ENCODE measurements at regions of chr9 and their contacts with region 1.

Region 1: GRCh38 chr9:136790927-136791641 is at the start of gene TMEM141:
- DNase-seq: peak; percentile 99 to 100 (median 100)
- ATAC-seq: peak; percentile 85
- H3K4me3 ChIP-seq: peak within 1 kb of the TSS; percentile 73 to 74
- H3K4me3 Mint-ChIP-seq: peak within 1 kb of the TSS; percentile 85
- H3K27ac ChIP-seq: peak within 1 kb of the TSS; percentile 88 to 94
- H3K27ac Mint-ChIP-seq: peak within 1 kb of the TSS; percentile 97
- H3K4me1 ChIP-seq: peaks cover 32% of the 10 kb centered on the region
- H3K4me1 Mint-ChIP-seq: peaks cover 29% of the 10 kb centered on the region
- H3K27me3 ChIP-seq: no peaks in the 10 kb centered on the region
- H3K27me3 Mint-ChIP-seq: no peaks in the 10 kb centered on the region
- CTCF ChIP-seq: no peak
- total RNA-seq, gene TMEM141: 14.5 to 16.6 TPM

Region 2: DNA sequence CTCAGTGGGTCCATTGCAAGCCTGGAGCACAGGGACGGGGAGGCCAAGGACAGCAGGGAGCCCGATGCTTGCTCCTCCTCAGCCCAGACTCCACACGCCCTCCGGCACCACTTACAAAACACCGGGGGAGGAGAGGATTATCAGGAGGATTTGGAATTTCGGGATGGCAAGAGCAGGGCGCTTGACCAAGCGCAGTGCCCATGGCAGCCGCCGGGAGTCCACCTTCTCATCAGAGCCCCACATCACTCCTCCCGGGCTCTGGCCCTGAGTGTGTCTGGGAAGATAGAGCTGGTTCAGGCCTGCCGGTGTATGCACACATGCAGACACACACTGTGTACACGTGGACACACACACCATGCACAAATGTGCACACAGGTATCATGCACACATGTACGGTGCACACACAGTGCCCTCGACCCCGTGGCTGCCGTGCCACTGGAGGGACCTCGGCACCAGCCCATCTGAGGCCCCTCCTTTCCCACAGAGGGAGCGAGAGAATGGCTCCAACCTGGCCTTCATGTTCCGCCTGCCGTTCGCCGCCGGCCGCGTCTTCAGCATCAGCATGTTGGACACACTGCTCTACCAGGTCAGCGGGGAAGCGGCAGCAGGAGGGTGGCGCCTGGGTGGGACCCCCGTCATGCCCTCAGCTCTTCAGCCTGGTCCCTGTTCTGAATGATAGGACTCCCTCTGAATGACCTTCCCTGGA is 1007.4 kb before region 1 on chr9:
- CTCF ChIA-PET with region 1: no interaction called
- POLR2A ChIA-PET with region 1: no interaction called
- intact Hi-C with region 1: no loop called
- DNase-seq: peak in 1 of 9 experiments; percentile 1
- ATAC-seq: no peak
- H3K4me3 ChIP-seq: no peak overlapping the region
- H3K4me3 Mint-ChIP-seq: no peak overlapping the region
- H3K27ac ChIP-seq: no peak overlapping the region
- H3K27ac Mint-ChIP-seq: no peak overlapping the region
- H3K4me1 ChIP-seq: no peaks in the 10 kb centered on the region
- H3K4me1 Mint-ChIP-seq: no peaks in the 10 kb centered on the region
- H3K27me3 ChIP-seq: no peaks in the 10 kb centered on the region
- H3K27me3 Mint-ChIP-seq: no peaks in the 10 kb centered on the region
- CTCF ChIP-seq: no peak

Region 3: GRCh38 chr9:136807281-136808074 is 16.4 kb after region 1 on chr9 and contains the start of gene RABL6:
- CTCF ChIA-PET with region 1: interaction called, 10 read pairs
- POLR2A ChIA-PET with region 1: interaction called, 9 read pairs
- intact Hi-C with region 1: loop called (anchors 1 kb)
- DNase-seq: peak; percentile 64 to 92 (median 81)
- ATAC-seq: peak; percentile 85
- H3K4me3 ChIP-seq: peak within 1 kb of the TSS; percentile 78 to 92
- H3K4me3 Mint-ChIP-seq: peak within 1 kb of the TSS; percentile 88
- H3K27ac ChIP-seq: peak within 1 kb of the TSS; percentile 66 to 79
- H3K27ac Mint-ChIP-seq: peak within 1 kb of the TSS; percentile 89
- H3K4me1 ChIP-seq: peaks cover 26% of the 10 kb centered on the region
- H3K4me1 Mint-ChIP-seq: peaks cover 34% of the 10 kb centered on the region
- H3K27me3 ChIP-seq: no peaks in the 10 kb centered on the region
- H3K27me3 Mint-ChIP-seq: no peaks in the 10 kb centered on the region
- CTCF ChIP-seq: no peak
- total RNA-seq, gene RABL6: 53.3 to 55.5 TPM

Region 4: GRCh38 chr9:136835162-136835931 is 44.3 kb after region 1 on chr9:
- CTCF ChIA-PET with region 1: no interaction called
- POLR2A ChIA-PET with region 1: no interaction called
- intact Hi-C with region 1: no loop called
- DNase-seq: peak in 1 of 9 experiments; percentile 12
- ATAC-seq: no peak
- H3K4me3 ChIP-seq: no peak overlapping the region
- H3K4me3 Mint-ChIP-seq: no peak overlapping the region
- H3K27ac ChIP-seq: no peak overlapping the region
- H3K27ac Mint-ChIP-seq: no peak overlapping the region
- H3K4me1 ChIP-seq: no peaks in the 10 kb centered on the region
- H3K4me1 Mint-ChIP-seq: peaks cover 4% of the 10 kb centered on the region
- H3K27me3 ChIP-seq: no peaks in the 10 kb centered on the region
- H3K27me3 Mint-ChIP-seq: no peaks in the 10 kb centered on the region
- CTCF ChIP-seq: no peak

Region 5: DNA sequence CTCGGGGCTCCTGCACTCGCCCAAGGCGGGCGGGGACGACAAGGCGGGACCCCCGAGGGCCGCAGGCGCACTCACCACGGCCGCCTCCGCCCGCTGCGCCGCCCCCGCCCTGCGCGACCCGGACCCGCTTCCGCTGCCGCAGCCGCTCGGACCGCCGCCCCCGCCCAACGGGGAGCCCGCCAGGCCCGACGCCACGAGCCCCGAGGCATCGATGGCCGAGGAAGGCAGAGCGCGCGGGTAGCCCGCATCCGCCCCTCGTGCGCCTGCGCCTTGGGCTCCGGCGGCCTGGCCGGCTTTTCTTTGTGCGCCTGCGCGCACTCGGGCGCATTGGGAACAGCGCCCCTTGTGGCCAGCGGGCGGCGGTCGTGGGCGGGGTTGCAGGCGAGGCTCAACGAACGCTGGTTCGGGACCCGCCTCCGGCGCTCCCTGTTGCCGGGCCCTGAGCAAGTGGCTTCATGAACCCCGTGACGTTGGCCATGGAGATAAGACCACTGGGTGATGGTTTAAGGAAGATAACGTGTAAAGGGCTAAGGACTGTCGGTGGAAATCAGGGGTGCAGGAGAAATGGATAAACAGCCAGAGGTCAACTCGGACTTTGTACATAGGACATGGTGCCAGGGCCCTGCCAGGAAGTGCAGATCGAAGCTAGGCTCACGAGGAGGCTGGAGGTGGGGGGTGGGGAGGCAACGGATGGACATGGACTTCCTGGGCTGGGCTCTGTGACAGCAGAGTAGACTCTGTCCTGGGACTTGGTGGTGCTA is 153.6 kb after region 1 on chr9 and contains the starts of genes C8G and FBXW5:
- CTCF ChIA-PET with region 1: no interaction called
- POLR2A ChIA-PET with region 1: no interaction called
- intact Hi-C with region 1: loop called (anchors 1 kb)
- DNase-seq: peak; percentile 87 to 98 (median 93)
- ATAC-seq: peak; percentile 87
- H3K4me3 ChIP-seq: peak within 1 kb of the TSS; percentile 63 to 79
- H3K4me3 Mint-ChIP-seq: peak within 1 kb of the TSS; percentile 82
- H3K27ac ChIP-seq: peak within 1 kb of the TSS; percentile 28 to 48
- H3K27ac Mint-ChIP-seq: peak within 1 kb of the TSS; percentile 62
- H3K4me1 ChIP-seq: peaks cover 16% of the 10 kb centered on the region
- H3K4me1 Mint-ChIP-seq: peaks cover 12% of the 10 kb centered on the region
- H3K27me3 ChIP-seq: no peaks in the 10 kb centered on the region
- H3K27me3 Mint-ChIP-seq: no peaks in the 10 kb centered on the region
- CTCF ChIP-seq: peak; percentile 96
- total RNA-seq, gene C8G: not detected
- total RNA-seq, gene FBXW5: 38.4 to 39.5 TPM

Region 6: DNA sequence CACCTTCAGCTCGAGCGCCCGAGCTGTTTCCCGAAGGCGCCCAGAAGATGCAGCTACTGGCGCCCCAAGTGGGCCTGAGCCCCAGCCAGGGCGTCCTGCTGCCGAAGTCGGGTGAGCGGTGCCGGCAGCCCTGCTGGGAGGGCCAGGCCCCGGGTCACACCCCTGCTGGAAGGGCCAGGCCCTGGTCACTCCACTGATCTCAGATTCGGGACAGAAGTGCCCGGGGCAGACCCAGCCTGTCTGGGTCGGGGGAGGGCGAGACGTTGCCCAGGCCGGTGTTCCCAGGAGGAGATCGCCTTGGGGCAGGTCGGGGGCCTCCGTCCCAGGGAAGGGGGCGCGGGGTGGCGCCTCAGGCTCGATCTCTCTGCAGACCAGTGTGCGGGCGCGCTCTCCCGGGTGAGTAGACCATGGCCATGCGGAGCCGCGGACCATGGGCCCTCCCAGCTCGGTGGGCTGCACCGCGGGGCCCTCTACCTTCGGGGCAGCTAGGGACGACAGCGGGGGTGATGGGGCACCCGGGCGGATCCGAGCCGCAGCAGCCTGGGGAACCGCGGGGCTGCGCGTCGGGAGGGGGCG is 194.0 kb after region 1 on chr9:
- CTCF ChIA-PET with region 1: no interaction called
- POLR2A ChIA-PET with region 1: no interaction called
- intact Hi-C with region 1: no loop called
- DNase-seq: peak in 2 of 9 experiments; percentile 38 to 56
- ATAC-seq: peak; percentile 57
- H3K4me3 ChIP-seq: peak overlapping the region; percentile 19 to 45
- H3K4me3 Mint-ChIP-seq: peak overlapping the region; percentile 18
- H3K27ac ChIP-seq: no peak overlapping the region
- H3K27ac Mint-ChIP-seq: no peak overlapping the region
- H3K4me1 ChIP-seq: peaks cover 10% of the 10 kb centered on the region
- H3K4me1 Mint-ChIP-seq: peaks cover 5% of the 10 kb centered on the region
- H3K27me3 ChIP-seq: peaks cover 3 to 14% of the 10 kb centered on the region in 2 experiments
- H3K27me3 Mint-ChIP-seq: peaks cover 12% of the 10 kb centered on the region
- CTCF ChIP-seq: no peak

Region 7: GRCh38 chr9:137064027-137064879 is 273.2 kb after region 1 on chr9:
- CTCF ChIA-PET with region 1: interaction called, 27 read pairs
- POLR2A ChIA-PET with region 1: no interaction called
- intact Hi-C with region 1: loop called (anchors 1 kb)
- DNase-seq: peak in 8 of 9 experiments; percentile 34 to 77 (median 62)
- ATAC-seq: peak; percentile 30
- H3K4me3 ChIP-seq: no peak overlapping the region
- H3K4me3 Mint-ChIP-seq: no peak overlapping the region
- H3K27ac ChIP-seq: no peak overlapping the region
- H3K27ac Mint-ChIP-seq: no peak overlapping the region
- H3K4me1 ChIP-seq: peaks cover 3% of the 10 kb centered on the region
- H3K4me1 Mint-ChIP-seq: peaks cover 8% of the 10 kb centered on the region
- H3K27me3 ChIP-seq: peaks cover 0 to 5% of the 10 kb centered on the region in 2 experiments
- H3K27me3 Mint-ChIP-seq: peaks cover 2% of the 10 kb centered on the region
- CTCF ChIP-seq: peak; percentile 85

Region 8: DNA sequence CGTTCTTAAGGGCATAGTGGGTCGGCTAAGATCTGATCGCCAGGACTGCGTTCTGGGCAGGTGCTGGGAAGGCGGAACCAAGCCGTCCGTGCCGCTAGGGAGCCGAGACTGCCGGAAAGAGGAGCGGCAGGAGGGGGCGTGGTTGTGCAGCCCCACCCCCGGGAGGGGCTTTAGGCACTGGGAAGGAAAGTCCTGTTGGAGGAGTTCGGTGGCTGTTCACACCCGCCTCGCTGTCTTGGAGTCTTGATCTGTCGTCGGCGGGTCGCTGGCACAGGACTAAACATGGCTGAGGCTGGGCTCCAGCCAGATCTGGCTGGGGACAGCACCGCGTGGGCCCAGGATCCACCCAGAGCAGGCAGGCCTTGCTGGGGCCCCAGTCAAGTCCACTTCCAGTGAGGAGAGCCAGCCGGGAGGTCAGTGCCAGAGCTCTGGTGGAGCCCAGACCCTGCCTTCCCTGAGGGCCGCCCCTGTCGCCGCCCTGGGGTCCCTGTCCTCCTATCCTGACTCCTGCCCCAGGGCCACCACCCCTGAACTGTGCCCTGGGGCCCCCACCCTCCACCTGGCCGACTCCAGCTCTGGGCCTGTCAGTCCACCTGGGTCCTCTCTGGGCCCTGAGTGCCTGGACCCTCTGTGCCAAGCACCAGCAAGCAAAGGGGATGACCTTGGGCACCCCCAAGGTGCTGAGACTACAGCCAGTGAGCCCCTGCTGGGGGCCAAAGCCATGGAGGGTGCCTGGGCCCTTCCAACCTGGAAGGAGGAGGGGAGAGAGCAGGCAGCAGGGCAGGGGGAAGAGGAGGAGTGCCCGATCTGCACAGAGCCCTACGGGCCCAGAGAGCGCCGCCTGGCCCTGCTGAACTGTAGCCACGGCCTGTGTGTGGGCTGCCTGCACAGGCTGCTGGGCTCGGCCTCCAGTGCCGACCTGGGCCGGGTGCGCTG is 426.5 kb after region 1 on chr9:
- CTCF ChIA-PET with region 1: no interaction called
- POLR2A ChIA-PET with region 1: no interaction called
- intact Hi-C with region 1: no loop called
- DNase-seq: no peak
- ATAC-seq: no peak
- H3K4me3 ChIP-seq: no peak overlapping the region
- H3K4me3 Mint-ChIP-seq: no peak overlapping the region
- H3K27ac ChIP-seq: no peak overlapping the region
- H3K27ac Mint-ChIP-seq: no peak overlapping the region
- H3K4me1 ChIP-seq: peaks cover 2% of the 10 kb centered on the region
- H3K4me1 Mint-ChIP-seq: no peaks in the 10 kb centered on the region
- H3K27me3 ChIP-seq: no peaks in the 10 kb centered on the region
- H3K27me3 Mint-ChIP-seq: no peaks in the 10 kb centered on the region
- CTCF ChIP-seq: no peak

Region 9: DNA sequence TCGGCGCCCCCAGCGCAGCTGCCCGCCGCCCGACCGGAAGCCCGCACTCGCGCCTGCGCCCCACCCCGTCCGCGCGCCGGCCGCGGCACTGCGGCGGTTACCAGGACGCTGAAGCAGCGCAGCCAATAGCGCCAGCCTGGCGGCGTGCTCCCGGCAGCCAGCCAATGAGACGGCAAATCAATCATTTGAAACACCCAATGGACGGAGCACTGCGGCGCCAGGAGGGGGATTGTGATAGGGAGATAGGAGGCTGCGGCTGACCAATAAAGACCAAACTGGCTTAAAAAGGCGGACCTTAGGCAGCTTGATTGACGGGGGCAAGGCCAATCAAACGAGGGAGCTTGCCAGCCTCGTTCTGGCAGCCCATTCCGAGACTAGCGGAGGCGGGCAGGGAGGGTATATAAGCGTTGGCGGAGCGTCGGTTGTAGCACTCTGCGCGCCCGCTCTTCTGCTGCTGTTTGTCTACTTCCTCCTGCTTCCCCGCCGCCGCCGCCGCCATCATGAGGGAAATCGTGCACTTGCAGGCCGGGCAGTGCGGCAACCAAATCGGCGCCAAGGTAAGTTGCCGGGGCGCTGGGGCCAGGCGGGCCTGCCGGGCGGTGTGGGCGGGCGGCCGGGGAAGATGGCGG is 449.9 kb after region 1 on chr9 and contains the start of gene TUBB4B:
- CTCF ChIA-PET with region 1: interaction called, 3 read pairs
- POLR2A ChIA-PET with region 1: no interaction called
- intact Hi-C with region 1: loop called (anchors 1 to 5 kb)
- DNase-seq: peak; percentile 93 to 100 (median 97)
- ATAC-seq: peak; percentile 78
- H3K4me3 ChIP-seq: peak within 1 kb of the TSS; percentile 59 to 68
- H3K4me3 Mint-ChIP-seq: peak within 1 kb of the TSS; percentile 91
- H3K27ac ChIP-seq: peak within 1 kb of the TSS; percentile 73 to 85
- H3K27ac Mint-ChIP-seq: peak within 1 kb of the TSS; percentile 93
- H3K4me1 ChIP-seq: peaks cover 37% of the 10 kb centered on the region
- H3K4me1 Mint-ChIP-seq: peaks cover 25% of the 10 kb centered on the region
- H3K27me3 ChIP-seq: no peaks in the 10 kb centered on the region
- H3K27me3 Mint-ChIP-seq: no peaks in the 10 kb centered on the region
- CTCF ChIP-seq: no peak
- total RNA-seq, gene TUBB4B: 114 to 120 TPM

Region 10: GRCh38 chr9:137605121-137606004 is 814.3 kb after region 1 on chr9 and contains the start of gene ARRDC1:
- CTCF ChIA-PET with region 1: no interaction called
- POLR2A ChIA-PET with region 1: no interaction called
- intact Hi-C with region 1: loop called in 1 of 2 experiments (anchors 2 kb)
- DNase-seq: peak; percentile 89 to 97 (median 93)
- ATAC-seq: peak; percentile 81
- H3K4me3 ChIP-seq: peak within 1 kb of the TSS; percentile 46 to 70
- H3K4me3 Mint-ChIP-seq: peak within 1 kb of the TSS; percentile 82
- H3K27ac ChIP-seq: peak within 1 kb of the TSS in 1 of 2 experiments; percentile 52
- H3K27ac Mint-ChIP-seq: peak within 1 kb of the TSS; percentile 80
- H3K4me1 ChIP-seq: peaks cover 15% of the 10 kb centered on the region
- H3K4me1 Mint-ChIP-seq: peaks cover 20% of the 10 kb centered on the region
- H3K27me3 ChIP-seq: no peaks in the 10 kb centered on the region
- H3K27me3 Mint-ChIP-seq: no peaks in the 10 kb centered on the region
- CTCF ChIP-seq: no peak
- total RNA-seq, gene ARRDC1: 30.8 to 35.9 TPM

Measured in CD8-positive, alpha-beta T cell (primary cell).